ENCODE measurements at regions of chr11 and their contacts with region 1.

Region 1: DNA sequence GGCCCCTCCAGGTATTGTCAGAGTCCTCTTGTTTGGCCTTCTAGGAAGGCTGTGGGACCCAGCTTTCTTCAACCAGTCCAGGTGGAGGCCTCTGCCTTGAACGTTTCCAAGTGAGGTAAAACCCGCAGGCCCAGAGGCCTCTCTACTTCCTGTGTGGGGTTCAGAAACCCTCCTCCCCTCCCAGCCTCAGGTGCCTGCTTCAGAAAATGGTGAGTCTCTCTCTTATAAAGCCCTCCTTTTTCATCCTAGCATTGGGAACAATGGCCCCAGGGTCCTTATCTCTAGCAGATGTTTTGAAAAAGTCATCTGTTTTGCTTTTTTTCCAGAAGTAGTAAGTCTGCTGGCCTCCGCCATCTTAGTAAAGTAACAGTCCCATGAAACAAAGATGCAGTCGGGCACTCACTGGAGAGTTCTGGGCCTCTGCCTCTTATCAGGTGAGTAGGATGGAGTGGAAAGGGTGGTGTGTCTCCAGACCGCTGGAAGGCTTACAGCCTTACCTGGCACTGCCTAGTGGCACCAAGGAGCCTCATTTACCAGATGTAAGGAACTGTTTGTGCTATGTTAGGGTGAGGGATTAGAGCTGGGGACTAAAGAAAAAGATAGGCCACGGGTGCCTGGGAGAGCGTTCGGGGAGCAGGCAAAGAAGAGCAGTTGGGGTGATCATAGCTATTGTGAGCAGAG is at the start of gene CD3E:
- DNase-seq: no peak
- CTCF ChIP-seq: no peak

Region 2: GRCh38 chr11:118290923-118291322 is 13.8 kb before region 1 on chr11:
- CTCF ChIA-PET with region 1: interaction called, 26 read pairs
- POLR2A ChIA-PET with region 1: no interaction called
- DNase-seq: peak; percentile 50
- CTCF ChIP-seq: peak; percentile 61

Region 3: GRCh38 chr11:118325283-118325682 is 20.6 kb after region 1 on chr11:
- CTCF ChIA-PET with region 1: no interaction called
- POLR2A ChIA-PET with region 1: no interaction called
- DNase-seq: no peak
- CTCF ChIP-seq: no peak

Measured in GM10248 (cell line).